Activated CD8-positive, alpha-beta T cell treated with anti-CD3 and anti-CD28 coated beads, Interleukin-2, amount 10 ng/mL, durations not matched to agents 7 days and 5 days (primary cell): ENCODE measurements at regions of chr14 and their contacts with region 1.

Region 1: DNA sequence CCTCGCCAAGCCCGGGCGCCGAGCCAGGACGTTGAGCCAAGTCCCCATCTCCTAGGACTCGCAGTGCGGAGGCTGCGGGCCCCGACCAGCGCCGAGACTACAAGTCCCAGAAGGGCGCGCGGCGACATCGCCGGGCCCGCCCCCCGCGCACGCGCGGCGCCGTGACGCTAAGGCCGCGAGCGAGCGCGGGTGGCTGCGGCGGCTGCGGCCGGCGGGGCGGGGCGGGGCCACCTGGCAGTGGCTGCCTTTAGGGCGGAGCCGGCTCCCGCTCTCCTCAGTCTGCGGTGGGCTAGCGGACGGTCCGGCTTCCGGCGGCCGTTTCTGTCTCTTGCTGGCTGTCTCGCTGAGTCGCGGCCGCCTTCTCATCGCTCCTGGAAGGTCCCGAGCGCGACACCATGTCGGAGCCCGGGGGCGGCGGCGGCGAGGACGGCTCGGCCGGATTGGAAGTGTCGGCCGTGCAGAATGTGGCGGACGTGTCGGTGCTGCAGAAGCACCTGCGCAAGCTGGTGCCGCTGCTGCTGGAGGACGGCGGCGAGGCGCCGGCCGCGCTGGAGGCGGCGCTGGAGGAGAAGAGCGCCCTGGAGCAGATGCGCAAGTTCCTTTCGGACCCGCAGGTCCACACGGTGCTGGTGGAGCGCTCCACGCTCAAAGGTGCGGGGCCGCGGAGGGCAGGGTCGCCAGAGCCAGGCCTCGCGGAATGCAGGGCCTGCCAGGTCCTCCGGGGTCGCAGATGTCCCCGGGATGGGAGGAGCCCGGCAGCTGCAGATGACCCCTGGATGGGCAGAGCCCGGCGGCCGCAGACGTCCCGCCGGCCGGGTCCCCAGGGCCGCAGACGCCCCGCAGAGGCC is at the start of gene DYNC1H1:
- DNase-seq: peak; percentile 90
- ATAC-seq: peak; percentile 86
- H3K4me3 Mint-ChIP-seq: peak within 1 kb of the TSS; percentile 94
- H3K27ac Mint-ChIP-seq: peak within 1 kb of the TSS; percentile 94
- H3K4me1 Mint-ChIP-seq: peaks cover 44% of the 10 kb centered on the region
- H3K27me3 Mint-ChIP-seq: peaks cover 3% of the 10 kb centered on the region
- total RNA-seq, gene DYNC1H1: 271 to 274 TPM

Region 2: DNA sequence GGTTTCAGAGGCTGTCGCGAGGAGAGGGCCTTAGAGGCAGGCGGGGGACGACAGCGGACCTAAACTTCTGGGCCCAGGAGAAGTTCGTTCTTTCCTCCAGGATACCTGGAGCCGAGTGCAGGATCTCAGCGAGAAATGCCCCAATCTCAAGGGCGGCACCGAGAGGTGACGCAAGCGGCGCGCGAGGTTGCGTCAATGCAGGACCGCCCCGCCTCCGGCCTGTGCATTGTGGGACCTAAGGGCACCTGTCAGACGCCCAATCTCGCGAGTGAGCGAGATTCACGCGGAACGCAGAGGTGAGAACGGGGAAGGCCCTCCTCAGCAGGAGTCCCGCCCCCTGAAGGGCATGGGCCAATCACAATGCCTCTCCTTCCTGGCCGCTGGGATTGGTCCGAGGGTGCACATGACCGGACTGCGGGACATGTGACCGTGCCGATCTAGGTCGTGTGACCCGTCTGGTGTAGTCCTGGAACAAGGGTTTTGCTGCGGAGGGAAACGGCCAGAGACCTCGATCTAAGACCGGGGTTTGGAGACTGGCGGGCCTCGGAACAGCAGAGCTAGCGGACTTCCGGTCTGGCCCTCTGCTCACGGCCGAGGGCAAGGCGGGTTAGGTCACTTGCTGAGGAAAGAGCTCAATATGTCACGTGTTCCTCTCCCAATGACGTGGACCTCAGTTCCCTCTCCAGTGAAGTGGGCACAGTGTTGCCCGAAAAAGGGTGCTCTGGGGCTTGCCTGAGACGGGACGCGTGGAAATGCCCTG is 16.4 kb before region 1 on chr14:
- CTCF ChIA-PET with region 1: interaction called, 12 read pairs
- POLR2A ChIA-PET with region 1: interaction called, 6 read pairs
- DNase-seq: peak; percentile 100
- ATAC-seq: peak; percentile 98
- H3K4me3 Mint-ChIP-seq: peak overlapping the region; percentile 97
- H3K27ac Mint-ChIP-seq: peak overlapping the region; percentile 97
- H3K4me1 Mint-ChIP-seq: peaks cover 18% of the 10 kb centered on the region
- H3K27me3 Mint-ChIP-seq: peaks cover 19% of the 10 kb centered on the region

Region 3: DNA sequence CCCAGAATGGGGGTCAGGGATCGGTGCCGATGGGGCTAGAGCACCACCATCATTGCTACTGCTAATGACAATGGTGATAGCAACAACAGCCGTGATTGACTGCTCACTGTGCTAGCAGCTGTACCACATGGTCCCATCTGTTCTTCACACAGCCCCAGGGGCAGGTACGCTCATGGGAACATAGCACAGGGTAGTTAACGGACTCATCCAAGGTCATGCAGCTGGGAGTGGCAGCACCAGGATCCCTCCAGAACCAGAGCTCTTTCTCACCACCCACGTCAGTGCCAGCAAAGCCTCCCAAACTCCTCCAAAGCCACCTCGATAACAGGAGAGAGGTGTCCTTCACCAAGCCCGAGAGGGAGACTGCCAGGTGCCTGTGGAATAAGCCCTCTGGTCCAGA is 11.4 kb before region 1 on chr14:
- CTCF ChIA-PET with region 1: interaction called, 12 read pairs
- POLR2A ChIA-PET with region 1: interaction called, 6 read pairs
- DNase-seq: no peak
- ATAC-seq: no peak
- H3K4me3 Mint-ChIP-seq: no peak overlapping the region
- H3K27ac Mint-ChIP-seq: no peak overlapping the region
- H3K4me1 Mint-ChIP-seq: peaks cover 12% of the 10 kb centered on the region
- H3K27me3 Mint-ChIP-seq: no peaks in the 10 kb centered on the region

Region 4: DNA sequence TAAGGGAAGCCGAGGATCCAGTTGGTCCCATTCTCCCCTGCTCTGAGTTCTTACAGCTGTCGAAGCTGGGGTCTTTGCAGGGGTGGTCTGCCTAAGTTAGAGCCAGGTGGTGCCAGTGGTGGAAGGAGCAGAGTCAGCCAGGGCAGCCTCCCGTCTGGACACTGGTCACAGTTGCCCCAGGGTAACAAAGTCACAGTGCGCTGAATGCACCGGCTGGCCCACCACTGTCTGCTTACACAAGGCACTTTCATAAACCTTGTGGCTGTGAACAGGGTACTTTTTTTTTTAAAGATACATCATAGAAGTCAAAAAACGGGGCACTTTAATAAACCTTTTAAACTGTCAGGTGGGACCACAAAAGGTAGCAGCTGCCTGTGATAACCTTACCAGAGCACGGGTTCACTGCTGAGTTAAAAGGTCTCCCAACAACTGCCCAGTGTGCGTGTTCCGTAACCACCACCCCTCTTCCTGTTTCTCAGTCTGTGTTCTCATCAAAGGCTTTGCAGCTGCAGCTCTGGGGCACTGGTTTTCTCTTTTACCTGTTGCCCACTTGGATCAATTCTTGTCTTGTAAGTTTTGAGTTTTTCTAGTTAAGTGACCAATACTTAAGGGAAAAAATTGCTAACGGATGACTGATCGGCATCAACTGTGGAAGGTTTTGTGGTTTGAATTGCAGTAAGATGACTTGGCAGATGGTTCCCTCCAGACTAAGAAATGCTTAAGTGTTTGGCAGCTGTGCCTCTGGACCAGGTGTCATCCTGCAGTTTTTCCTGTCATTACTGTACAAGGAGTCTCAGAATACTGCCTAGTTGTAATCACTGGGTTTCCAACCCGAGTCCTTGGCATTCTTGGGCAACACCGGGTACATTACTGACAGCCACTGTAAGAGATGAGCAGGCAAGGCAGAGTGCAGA is 55.8 kb after region 1 on chr14:
- CTCF ChIA-PET with region 1: interaction called, 8 read pairs
- POLR2A ChIA-PET with region 1: interaction called, 10 read pairs
- DNase-seq: peak; percentile 83
- ATAC-seq: peak; percentile 95
- H3K4me3 Mint-ChIP-seq: peak overlapping the region; percentile 61
- H3K27ac Mint-ChIP-seq: peak overlapping the region; percentile 91
- H3K4me1 Mint-ChIP-seq: peaks cover 34% of the 10 kb centered on the region
- H3K27me3 Mint-ChIP-seq: no peaks in the 10 kb centered on the region

Region 5: DNA sequence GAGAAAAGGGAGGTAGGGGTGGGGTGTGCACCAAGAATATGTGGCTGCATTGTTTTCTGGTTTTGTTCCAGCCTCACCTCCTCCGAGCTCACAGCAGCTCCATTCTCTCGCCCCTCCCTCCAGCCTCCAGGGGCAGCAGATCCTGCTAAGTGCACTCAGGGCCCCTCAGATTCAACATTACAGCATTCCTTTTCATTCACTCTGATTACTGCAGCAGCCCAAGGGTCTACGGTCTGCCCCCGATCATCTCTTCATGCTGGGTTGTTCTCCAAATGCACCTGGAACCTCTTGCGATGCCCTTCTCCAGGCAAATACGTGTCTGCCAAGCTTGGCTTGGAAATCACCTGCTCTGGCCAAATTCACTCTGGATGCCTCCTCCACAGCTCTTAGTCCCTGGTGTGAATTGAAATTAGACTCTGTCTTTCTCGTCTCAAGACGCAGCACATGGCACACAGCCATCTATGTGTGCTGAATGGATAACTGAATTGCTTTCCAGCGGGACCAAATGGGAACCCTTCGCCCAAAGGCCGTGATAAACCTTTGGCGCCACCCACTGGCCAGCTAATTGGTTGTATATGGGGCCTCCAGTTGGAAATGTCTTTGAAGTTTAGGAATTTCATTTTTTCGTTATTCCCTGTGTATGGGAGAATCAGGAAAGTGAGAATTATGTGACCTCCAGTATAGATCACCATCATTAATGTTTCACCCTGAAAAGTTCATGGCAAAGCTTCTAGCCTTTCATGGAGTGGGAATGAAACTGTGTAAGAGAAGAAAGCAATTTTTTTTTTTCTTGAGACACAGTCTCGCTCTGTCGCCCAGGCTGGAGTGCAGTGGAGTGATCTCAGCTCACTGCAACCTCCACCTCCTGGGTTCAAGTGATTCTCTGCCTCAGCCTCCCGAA is 131.9 kb after region 1 on chr14:
- CTCF ChIA-PET with region 1: interaction called, 33 read pairs
- POLR2A ChIA-PET with region 1: interaction called, 3 read pairs
- DNase-seq: peak; percentile 74
- ATAC-seq: peak; percentile 82
- H3K4me3 Mint-ChIP-seq: no peak overlapping the region
- H3K27ac Mint-ChIP-seq: no peak overlapping the region
- H3K4me1 Mint-ChIP-seq: peaks cover 9% of the 10 kb centered on the region
- H3K27me3 Mint-ChIP-seq: no peaks in the 10 kb centered on the region